PC-3 (cell line): ENCODE measurements at regions of chr10 and their contacts with region 1.

Region 1: GRCh38 chr10:69800109-69800508 is 1.6 kb upstream of the COL13A1 start:
- DNase-seq: peak; percentile 93
- ATAC-seq: peak; percentile 26
- H3K4me3 ChIP-seq: no peak overlapping the region
- H3K27ac ChIP-seq: no peak overlapping the region
- H3K4me1 ChIP-seq: peaks cover 47% of the 10 kb centered on the region
- H3K27me3 ChIP-seq: no peaks in the 10 kb centered on the region
- CTCF ChIP-seq: peak; percentile 98

Region 2: GRCh38 chr10:69644658-69645295 is 155.3 kb before region 1 on chr10:
- CTCF ChIA-PET with region 1: interaction called, 5 read pairs
- POLR2A ChIA-PET with region 1: no interaction called
- intact Hi-C with region 1: loop called (anchors 1 kb)
- DNase-seq: peak; percentile 89
- ATAC-seq: peak; percentile 68
- H3K4me3 ChIP-seq: no peak overlapping the region
- H3K27ac ChIP-seq: no peak overlapping the region
- H3K4me1 ChIP-seq: peaks cover 10% of the 10 kb centered on the region
- H3K27me3 ChIP-seq: no peaks in the 10 kb centered on the region
- CTCF ChIP-seq: peak; percentile 100

Region 3: GRCh38 chr10:69728335-69728870 is 71.7 kb before region 1 on chr10:
- CTCF ChIA-PET with region 1: no interaction called
- POLR2A ChIA-PET with region 1: no interaction called
- intact Hi-C with region 1: loop called (anchors 2 kb)
- DNase-seq: peak; percentile 100
- ATAC-seq: peak; percentile 85
- H3K4me3 ChIP-seq: no peak overlapping the region
- H3K27ac ChIP-seq: peak overlapping the region; percentile 57
- H3K4me1 ChIP-seq: peaks cover 30% of the 10 kb centered on the region
- H3K27me3 ChIP-seq: no peaks in the 10 kb centered on the region
- CTCF ChIP-seq: no peak

Region 4: DNA sequence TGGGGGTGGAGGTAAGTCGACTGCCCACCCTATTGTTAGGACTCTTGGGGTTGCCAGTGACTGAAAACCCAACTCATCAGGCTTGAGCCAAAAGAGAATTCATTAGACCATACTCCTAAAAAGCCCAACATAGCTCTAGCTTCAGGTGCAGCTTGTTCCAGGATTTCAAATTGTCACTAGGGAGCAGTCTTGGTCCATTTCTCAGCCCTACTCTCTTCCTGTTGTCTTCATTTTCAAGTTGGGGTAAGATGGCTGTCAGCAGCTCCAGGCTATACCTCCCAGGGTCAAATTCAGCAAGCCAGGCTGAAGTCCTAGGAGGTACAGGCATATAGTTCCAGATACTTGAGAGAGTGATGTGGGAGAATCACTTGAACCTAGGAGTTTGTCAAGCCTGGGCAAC is 13.3 kb before region 1 on chr10:
- CTCF ChIA-PET with region 1: interaction called, 18 read pairs
- POLR2A ChIA-PET with region 1: no interaction called
- intact Hi-C with region 1: no loop called
- DNase-seq: peak; percentile 82
- ATAC-seq: peak; percentile 92
- H3K4me3 ChIP-seq: no peak overlapping the region
- H3K27ac ChIP-seq: no peak overlapping the region
- H3K4me1 ChIP-seq: no peaks in the 10 kb centered on the region
- H3K27me3 ChIP-seq: peaks cover 27% of the 10 kb centered on the region
- CTCF ChIP-seq: peak; percentile 83

Region 5: GRCh38 chr10:69869291-69869961 is 69.3 kb after region 1 on chr10:
- CTCF ChIA-PET with region 1: interaction called, 5 read pairs
- POLR2A ChIA-PET with region 1: no interaction called
- intact Hi-C with region 1: loop called (anchors 1 kb)
- DNase-seq: peak; percentile 99
- ATAC-seq: peak; percentile 64
- H3K4me3 ChIP-seq: peak overlapping the region; percentile 51
- H3K27ac ChIP-seq: peak overlapping the region; percentile 95
- H3K4me1 ChIP-seq: peaks cover 78% of the 10 kb centered on the region
- H3K27me3 ChIP-seq: no peaks in the 10 kb centered on the region
- CTCF ChIP-seq: no peak

Region 6: GRCh38 chr10:69914398-69915214 is 114.5 kb after region 1 on chr10:
- CTCF ChIA-PET with region 1: interaction called, 13 read pairs
- POLR2A ChIA-PET with region 1: no interaction called
- intact Hi-C with region 1: loop called (anchors 1 kb)
- DNase-seq: peak; percentile 89
- ATAC-seq: peak; percentile 76
- H3K4me3 ChIP-seq: no peak overlapping the region
- H3K27ac ChIP-seq: no peak overlapping the region
- H3K4me1 ChIP-seq: no peaks in the 10 kb centered on the region
- H3K27me3 ChIP-seq: no peaks in the 10 kb centered on the region
- CTCF ChIP-seq: peak; percentile 100